Dendritic cell treated with granulocyte-macrophage colony-stimulating factor and Interleukin-4, amounts not matched to agents 40 ng/mL and 50 ng/mL, for 4 days (primary cell): ENCODE measurements at regions of chr9 and their contacts with region 1.

Region 1: GRCh38 chr9:96344458-96345180 is 38.9 kb downstream of the SLC35D2 start:
- H3K4me3 Mint-ChIP-seq: no peak overlapping the region
- H3K27ac Mint-ChIP-seq: no peak overlapping the region
- H3K4me1 Mint-ChIP-seq: peaks cover 30% of the 10 kb centered on the region
- H3K27me3 Mint-ChIP-seq: no peaks in the 10 kb centered on the region

Region 2: GRCh38 chr9:96408409-96409280 is 64.0 kb after region 1 on chr9:
- intact Hi-C with region 1: loop called (anchors 10 kb)
- H3K4me3 Mint-ChIP-seq: no peak overlapping the region
- H3K27ac Mint-ChIP-seq: peak overlapping the region; percentile 50
- H3K4me1 Mint-ChIP-seq: peaks cover 23% of the 10 kb centered on the region
- H3K27me3 Mint-ChIP-seq: no peaks in the 10 kb centered on the region

Region 3: GRCh38 chr9:96418810-96419516 is 74.3 kb after region 1 on chr9:
- intact Hi-C with region 1: no loop called
- H3K4me3 Mint-ChIP-seq: peak overlapping the region; percentile 85
- H3K27ac Mint-ChIP-seq: peak overlapping the region; percentile 97
- H3K4me1 Mint-ChIP-seq: peaks cover 25% of the 10 kb centered on the region
- H3K27me3 Mint-ChIP-seq: no peaks in the 10 kb centered on the region

Region 4: DNA sequence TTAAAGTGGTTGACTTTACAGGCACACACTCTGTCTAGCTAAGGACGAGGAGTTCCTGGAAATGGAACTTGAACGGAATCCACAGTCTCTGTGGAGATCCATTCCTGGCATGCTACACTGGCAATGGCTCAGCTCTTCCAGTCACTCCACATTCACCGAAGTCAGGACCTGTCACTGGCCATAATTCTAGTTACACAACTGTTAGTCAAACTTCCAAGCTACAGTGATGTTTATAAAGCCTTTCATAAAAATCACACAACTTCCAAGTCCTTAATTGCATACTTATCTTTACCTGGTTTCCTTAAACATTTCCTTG is 259.3 kb after region 1 on chr9:
- intact Hi-C with region 1: no loop called
- H3K4me3 Mint-ChIP-seq: no peak overlapping the region
- H3K27ac Mint-ChIP-seq: no peak overlapping the region
- H3K4me1 Mint-ChIP-seq: no peaks in the 10 kb centered on the region
- H3K27me3 Mint-ChIP-seq: peaks cover under 1% of the 10 kb centered on the region